SK-N-SH (cell line): ENCODE measurements at regions of chr2 and their contacts with region 1.

Region 1: DNA sequence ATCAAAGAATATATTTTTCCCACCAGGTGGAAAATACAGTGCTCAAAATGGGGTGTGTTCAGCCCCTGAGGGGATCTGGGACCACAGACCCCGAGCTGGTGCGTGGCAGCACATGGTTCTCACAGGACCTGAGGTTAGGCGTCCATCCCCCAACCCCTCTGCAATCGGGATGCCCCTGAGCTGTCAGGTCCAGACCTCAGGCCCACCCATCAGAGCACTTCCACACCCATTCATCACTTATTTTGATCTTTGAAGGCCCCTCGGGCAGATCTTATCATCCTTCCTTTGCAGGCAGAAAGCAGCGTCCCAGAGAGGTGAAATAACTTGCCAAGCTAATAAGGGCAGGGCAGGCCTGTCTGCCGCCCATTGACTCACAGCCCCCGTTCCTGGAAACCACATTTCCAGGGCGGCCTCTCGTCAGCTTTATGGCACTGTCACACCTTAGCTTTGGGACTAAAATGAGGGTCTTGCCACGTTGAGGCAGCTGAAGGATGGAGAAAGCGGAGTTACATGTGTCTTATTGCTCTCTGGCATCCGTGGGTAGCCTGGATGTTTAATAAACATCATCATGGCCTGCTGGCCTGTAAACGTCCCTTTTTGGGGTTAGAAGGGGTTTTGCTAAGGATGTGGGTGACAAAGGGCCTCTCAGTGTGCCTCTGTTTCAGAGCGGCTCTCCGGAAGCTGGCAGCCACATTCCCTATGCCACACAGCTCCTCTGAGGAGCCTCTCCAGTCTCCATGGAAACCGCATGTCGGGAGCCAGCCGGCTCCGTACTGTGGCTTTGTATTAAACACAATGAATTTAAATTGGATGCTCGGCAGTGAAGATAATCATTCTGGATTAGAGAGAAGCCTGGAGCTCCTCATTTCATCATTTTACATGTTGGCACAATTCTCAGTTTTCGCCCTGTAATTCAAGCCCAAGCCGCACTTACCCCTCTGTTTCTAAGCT is 58.3 kb upstream of the MAPRE3 start:
- DNase-seq: peak; percentile 83
- H3K4me3 ChIP-seq: peak overlapping the region in 1 of 2 experiments; percentile 19; a peak in 1 of 4 replicates
- H3K27ac ChIP-seq: peak overlapping the region in 1 of 2 experiments; percentile 98; a peak in 2 of 4 replicates
- H3K4me1 ChIP-seq: peaks cover 3 to 45% of the 10 kb centered on the region in 2 experiments; a peak in 3 of 4 replicates
- H3K27me3 ChIP-seq: peaks cover 32% of the 10 kb centered on the region; the same call in 1 of the 2 replicates
- CTCF ChIP-seq: no peak
- EP300 ChIP-seq: peak in 1 of 2 experiments; percentile 86; a peak in 2 of 4 replicates
- RAD21 ChIP-seq: peak; percentile 13; the same call in 1 of the 2 replicates

Region 2: DNA sequence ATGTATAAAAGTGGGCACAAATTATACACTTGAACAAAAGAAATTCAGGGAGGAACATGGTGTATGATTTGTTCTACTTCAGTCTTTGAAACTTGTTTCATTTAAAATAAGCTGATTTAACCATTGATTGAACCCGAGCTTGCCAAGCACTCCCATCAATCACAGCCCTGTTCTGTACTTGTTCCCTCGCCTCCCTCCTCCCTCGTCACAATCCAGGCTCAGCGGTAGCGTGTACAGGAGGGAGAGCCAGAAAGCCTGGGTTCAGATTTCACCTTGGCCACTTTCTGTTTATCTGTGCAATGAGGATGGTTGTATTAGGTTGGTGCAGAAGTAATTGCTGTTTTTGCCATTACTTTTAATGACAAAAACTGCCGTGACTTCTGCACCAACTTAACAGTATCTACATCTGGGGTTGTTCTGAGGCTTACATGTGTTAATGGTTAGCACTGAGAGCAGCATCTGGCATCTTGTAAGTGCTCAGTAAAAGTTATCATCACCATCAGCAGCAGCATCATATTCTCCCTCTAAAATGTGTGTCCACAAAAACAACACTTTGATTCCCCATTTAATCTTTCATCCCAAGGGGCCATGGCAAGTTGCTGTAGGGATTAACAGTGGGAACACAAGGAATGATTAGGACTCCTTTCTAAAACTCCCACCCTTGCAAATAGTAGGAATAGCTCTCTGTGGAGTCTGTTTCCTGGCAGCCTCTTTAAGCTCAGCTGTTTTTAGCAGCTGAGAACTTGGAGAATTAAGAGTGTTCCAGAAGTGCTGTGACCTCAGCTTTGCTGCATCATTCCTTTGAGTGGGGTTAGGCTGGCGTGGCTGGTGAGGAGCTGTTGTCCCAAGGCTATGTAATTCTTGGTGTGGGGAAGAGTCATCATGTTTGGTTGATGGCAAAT is 59.5 kb before region 1 on chr2:
- CTCF ChIA-PET with region 1: interaction called, 779 read pairs
- POLR2A ChIA-PET with region 1: interaction called, 43 read pairs
- DNase-seq: peak; percentile 81
- H3K4me3 ChIP-seq: peak overlapping the region in 1 of 2 experiments; percentile 10; a peak in 1 of 4 replicates
- H3K27ac ChIP-seq: peak overlapping the region in 1 of 2 experiments; percentile 94; a peak in 2 of 4 replicates
- H3K4me1 ChIP-seq: peaks cover 0 to 40% of the 10 kb centered on the region in 2 experiments; a peak in 3 of 4 replicates
- H3K27me3 ChIP-seq: peaks cover 62% of the 10 kb centered on the region
- CTCF ChIP-seq: no peak
- EP300 ChIP-seq: peak in 1 of 2 experiments; percentile 85; a peak in 2 of 4 replicates
- RAD21 ChIP-seq: no peak; the same call in 1 of the 2 replicates